Activated T-helper 2 cell treated with anti-CD3 and anti-CD28 coated beads, Interferon-gamma antibody, Interleukin-2, Interleukin-4, amounts not matched to agents 10 μg/mL and 5 μg/mL and 100 μg/mL, durations not matched to agents 14 hours and 24 hours and 36 hours (primary cell): ENCODE measurements at regions of chr11 and their contacts with region 1.

Region 1: DNA sequence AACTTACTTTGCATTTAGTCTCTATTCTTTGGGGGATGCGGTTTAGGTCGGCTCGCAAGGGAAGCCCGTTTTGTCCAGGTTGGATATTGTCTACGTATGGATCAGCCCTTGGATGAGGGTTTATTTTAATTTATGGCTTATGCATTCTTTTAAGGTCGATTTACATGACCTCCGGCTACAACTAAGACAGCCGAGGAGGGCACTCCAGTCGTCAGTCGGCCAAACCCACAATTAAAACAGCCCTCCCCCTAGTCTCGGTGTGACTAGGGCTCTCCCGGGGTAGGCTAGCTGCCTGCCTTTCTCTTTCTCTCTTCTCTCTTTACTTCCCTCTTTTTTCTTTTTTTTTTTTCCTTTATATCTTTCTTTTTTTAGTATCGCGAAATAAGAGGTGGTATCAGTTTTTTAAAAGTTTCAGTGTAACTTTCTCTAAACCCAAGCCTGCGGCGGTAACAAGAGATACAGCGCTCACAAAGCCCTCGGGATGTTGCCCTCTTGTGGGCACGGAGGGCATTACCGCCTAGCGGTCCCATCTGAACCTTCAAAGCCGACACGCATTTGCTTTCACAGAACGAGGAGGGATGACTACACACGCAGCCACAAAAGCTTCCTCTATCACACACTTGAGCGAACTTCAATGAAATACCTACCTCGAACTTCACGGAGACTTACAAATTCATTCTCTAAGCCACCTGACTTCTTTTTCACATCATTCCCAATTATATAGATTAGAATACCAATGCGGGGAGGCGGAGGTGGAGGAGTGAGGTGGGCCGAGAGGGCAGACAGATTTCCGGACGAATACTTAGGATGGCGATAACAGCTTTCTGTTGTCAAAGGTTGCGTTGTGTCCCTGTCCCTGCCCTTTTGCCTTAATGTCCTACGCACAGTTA is 132.3 kb upstream of the C11orf58 start:
- DNase-seq: peak; percentile 79
- H3K4me3 Mint-ChIP-seq: peak overlapping the region; percentile 74
- H3K27ac Mint-ChIP-seq: peak overlapping the region; percentile 46
- H3K4me1 Mint-ChIP-seq: peaks cover 13% of the 10 kb centered on the region
- H3K27me3 Mint-ChIP-seq: peaks cover 45% of the 10 kb centered on the region

Region 2: DNA sequence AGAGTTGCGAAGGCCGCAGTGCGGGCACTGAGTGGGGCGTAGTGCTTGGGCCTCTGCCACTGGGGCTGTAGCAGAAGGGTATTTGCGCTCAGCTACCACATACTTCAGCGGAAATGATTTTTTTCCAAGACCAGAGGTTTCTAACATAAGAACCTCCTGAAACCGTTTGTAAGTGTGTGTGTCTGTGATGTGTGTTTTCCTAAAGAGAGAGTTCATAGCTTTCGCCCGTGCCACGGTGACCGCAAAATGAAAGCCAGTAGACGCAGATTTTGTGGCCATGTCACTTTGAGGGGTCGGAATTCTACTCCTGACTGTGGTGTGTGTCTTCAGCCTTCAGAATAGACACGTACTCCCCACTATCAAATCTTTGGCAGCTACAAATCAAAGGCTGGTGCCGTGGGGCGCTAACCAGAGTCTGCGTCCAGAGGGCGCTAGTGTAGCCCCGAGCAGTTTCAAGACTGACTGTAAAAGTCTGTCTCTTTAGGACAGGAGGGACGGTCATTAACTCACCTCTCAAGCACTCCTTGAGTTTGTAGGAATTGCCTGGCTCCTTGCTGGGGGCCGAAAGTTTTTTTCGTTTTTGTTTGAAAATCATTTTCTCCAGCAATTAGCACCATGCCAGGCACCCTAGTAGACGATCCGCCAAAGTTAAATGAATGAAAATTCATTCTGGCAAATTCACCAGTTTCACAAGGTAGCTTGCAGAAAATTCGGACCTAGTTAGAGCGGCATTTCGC is 1631.5 kb before region 1 on chr11:
- intact Hi-C with region 1: loop called (anchors 5 kb)
- DNase-seq: peak; percentile 53
- H3K4me3 Mint-ChIP-seq: peak overlapping the region; percentile 33
- H3K27ac Mint-ChIP-seq: no peak overlapping the region
- H3K4me1 Mint-ChIP-seq: peaks cover 21% of the 10 kb centered on the region
- H3K27me3 Mint-ChIP-seq: peaks cover 75% of the 10 kb centered on the region

Region 3: DNA sequence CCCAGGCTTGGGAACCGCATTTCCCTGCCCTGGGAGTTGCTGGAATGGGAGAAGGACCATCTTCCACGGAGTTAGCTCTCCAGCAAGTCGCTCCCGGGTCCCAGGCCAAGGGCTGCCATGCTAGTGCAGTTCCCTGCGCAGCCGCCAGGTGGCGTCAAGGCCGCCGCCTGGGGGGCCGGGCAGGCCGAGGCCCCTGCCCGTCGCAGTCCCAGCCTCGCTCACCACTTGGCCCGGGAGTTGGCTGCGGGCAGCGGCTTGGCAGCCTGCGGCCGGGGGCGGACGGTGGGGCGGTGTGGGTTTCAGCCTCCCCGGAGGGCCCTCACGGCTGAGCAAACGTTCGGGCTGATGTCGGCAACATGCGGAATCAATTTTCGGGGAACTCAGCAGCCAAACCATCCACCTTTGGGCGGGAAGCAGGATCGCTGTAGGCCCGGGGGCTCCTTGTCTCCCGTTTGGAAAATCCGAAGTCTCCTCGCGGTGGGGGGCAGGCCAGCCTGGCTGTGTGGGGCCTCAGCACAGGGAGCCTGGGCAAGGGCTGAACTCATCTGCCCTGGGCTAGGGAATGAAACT is 664.9 kb before region 1 on chr11:
- intact Hi-C with region 1: loop called (anchors 10 kb)
- DNase-seq: peak; percentile 10
- H3K4me3 Mint-ChIP-seq: no peak overlapping the region
- H3K27ac Mint-ChIP-seq: no peak overlapping the region
- H3K4me1 Mint-ChIP-seq: no peaks in the 10 kb centered on the region
- H3K27me3 Mint-ChIP-seq: no peaks in the 10 kb centered on the region

Region 4: GRCh38 chr11:16505481-16505880 is 100.7 kb before region 1 on chr11:
- intact Hi-C with region 1: no loop called
- DNase-seq: no peak
- H3K4me3 Mint-ChIP-seq: no peak overlapping the region
- H3K27ac Mint-ChIP-seq: no peak overlapping the region
- H3K4me1 Mint-ChIP-seq: no peaks in the 10 kb centered on the region
- H3K27me3 Mint-ChIP-seq: no peaks in the 10 kb centered on the region